Heart right ventricle (tissue), 16 donors: ENCODE measurements at regions of chr2 and their contacts with region 1.

Region 1: DNA sequence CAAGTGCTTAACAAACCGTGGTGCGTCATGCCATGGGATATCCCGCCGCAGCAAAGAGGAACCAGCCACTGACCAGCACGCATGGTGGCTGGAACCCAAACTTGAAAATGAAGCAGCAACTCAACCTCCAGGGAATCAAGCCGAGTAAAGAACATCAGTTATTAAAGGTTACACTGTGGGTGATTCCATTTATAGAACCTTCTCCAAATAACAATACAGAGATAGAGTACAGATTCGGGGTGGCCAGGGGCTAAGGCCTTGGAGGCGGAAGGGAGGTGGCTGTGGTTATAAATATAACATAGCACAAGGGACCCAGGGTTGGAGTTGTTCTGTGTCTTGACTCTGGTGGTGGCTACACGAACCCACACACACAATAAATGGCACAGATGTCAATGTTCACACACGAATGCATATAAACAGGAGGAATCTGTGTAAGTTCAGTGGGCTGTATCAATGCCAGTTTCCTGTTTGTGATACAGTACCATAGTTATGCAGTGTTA is 123.1 kb downstream of the EIPR1 start:
- DNase-seq: no peak
- ATAC-seq: peak in 3 of 8 donors; percentile 43 to 55 (median 47)
- H3K4me3 ChIP-seq: no peak overlapping the region
- H3K27ac ChIP-seq: no peak overlapping the region
- H3K4me1 ChIP-seq: no peaks in the 10 kb centered on the region
- H3K27me3 ChIP-seq: no peaks in the 10 kb centered on the region
- CTCF ChIP-seq: no peak

Region 2: DNA sequence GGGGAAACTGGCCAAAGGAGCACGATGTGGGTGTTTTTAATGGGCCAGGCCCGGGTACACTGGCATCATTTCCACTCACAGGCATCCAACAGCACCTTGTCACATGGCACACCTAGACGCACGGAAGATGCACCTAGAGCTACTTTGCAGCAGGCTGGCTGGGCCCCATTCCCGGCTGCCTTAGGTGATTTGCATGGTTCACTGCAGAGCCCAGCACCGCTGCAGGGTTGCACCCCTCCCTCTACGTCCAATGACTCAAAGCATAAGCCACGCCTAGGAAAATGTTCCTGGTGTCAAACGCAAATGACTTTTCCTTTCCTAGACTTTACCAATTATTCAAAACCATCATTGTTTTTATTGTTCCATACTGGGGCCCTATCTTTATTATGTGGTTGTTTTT is 99.8 kb before region 1 on chr2:
- intact Hi-C with region 1: no loop called
- DNase-seq: no peak
- ATAC-seq: no peak
- H3K4me3 ChIP-seq: no peak overlapping the region
- H3K27ac ChIP-seq: no peak overlapping the region
- H3K4me1 ChIP-seq: no peaks in the 10 kb centered on the region
- H3K27me3 ChIP-seq: no peaks in the 10 kb centered on the region
- CTCF ChIP-seq: no peak

Region 3: GRCh38 chr2:3242747-3243369 is 11.6 kb before region 1 on chr2:
- intact Hi-C with region 1: loop called in 1 of 10 experiments (anchors 1 kb)
- DNase-seq: no peak
- ATAC-seq: no peak
- H3K4me3 ChIP-seq: no peak overlapping the region
- H3K27ac ChIP-seq: no peak overlapping the region
- H3K4me1 ChIP-seq: peaks cover 0 to 11% (median 0%) of the 10 kb centered on the region in 9 donors
- H3K27me3 ChIP-seq: no peaks in the 10 kb centered on the region
- CTCF ChIP-seq: no peak

Region 4: GRCh38 chr2:3470166-3470651 is 215.7 kb after region 1 on chr2:
- intact Hi-C with region 1: no loop called
- DNase-seq: peak; percentile 79 to 88
- ATAC-seq: peak; percentile 52 to 89 (median 78)
- H3K4me3 ChIP-seq: no peak overlapping the region
- H3K27ac ChIP-seq: peak overlapping the region; percentile 70 to 87 (median 77)
- H3K4me1 ChIP-seq: peaks cover 14 to 61% (median 55%) of the 10 kb centered on the region in 9 donors
- H3K27me3 ChIP-seq: no peaks in the 10 kb centered on the region
- CTCF ChIP-seq: no peak

Region 5: DNA sequence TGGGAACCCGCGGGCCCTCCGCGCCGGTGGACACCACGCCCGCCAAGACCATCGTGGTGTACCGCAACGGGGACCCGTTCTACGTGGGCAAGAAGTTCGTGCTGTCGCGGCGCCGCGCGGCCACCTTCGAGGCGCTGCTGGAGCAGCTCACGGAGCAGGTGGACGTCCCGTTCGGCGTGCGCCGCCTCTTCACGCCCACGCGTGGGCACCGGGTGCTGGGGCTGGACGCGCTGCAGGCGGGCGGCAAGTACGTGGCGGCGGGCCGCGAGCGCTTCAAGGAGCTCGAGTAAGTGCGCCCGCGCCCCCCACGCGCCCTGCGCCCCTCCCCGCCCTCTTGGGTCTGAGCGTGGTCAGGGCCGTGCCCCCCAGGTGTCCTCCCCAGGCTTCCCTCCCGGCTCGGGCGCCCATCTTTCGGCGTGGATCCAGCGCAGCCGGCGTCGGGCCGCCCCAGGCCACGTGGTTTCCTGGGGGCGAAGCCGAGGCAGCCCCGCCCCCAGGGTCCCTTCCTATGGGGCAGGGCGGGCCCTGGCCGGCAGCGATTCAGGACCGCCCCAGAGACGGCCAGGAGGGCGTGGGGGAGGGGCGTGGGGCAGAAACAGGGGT is 449.4 kb after region 1 on chr2:
- intact Hi-C with region 1: no loop called
- DNase-seq: no peak
- ATAC-seq: peak in 1 of 8 donors; percentile 12
- H3K4me3 ChIP-seq: peak overlapping the region in 2 of 10 donors; percentile 10 to 11
- H3K27ac ChIP-seq: no peak overlapping the region
- H3K4me1 ChIP-seq: peaks cover 0 to 5% (median 0%) of the 10 kb centered on the region in 9 donors
- H3K27me3 ChIP-seq: peaks cover 9 to 65% (median 43%) of the 10 kb centered on the region in 7 donors
- CTCF ChIP-seq: no peak